Activated CD4-positive, alpha-beta T cell treated with anti-CD3 and anti-CD28 coated beads, Interleukin-2, amount 10 ng/mL, durations not matched to agents 7 days and 5 days (primary cell): ENCODE measurements at regions of chr11 and their contacts with region 1.

Region 1: GRCh38 chr11:134223836-134224709 is at the starts of genes NCAPD3 and VPS26B:
- DNase-seq: peak; percentile 98
- H3K4me3 Mint-ChIP-seq: peak within 1 kb of the TSS; percentile 88
- H3K27ac Mint-ChIP-seq: peak within 1 kb of the TSS; percentile 97
- H3K4me1 Mint-ChIP-seq: peaks cover 67% of the 10 kb centered on the region
- H3K27me3 Mint-ChIP-seq: no peaks in the 10 kb centered on the region
- total RNA-seq, gene NCAPD3: 118 to 125 TPM
- total RNA-seq, gene VPS26B: 66.4 to 66.9 TPM

Region 2: GRCh38 chr11:134244655-134245054 is 20.6 kb after region 1 on chr11:
- CTCF ChIA-PET with region 1: interaction called, 11 read pairs
- POLR2A ChIA-PET with region 1: no interaction called
- DNase-seq: peak; percentile 40
- H3K4me3 Mint-ChIP-seq: no peak overlapping the region
- H3K27ac Mint-ChIP-seq: peak overlapping the region; percentile 47
- H3K4me1 Mint-ChIP-seq: peaks cover 8% of the 10 kb centered on the region
- H3K27me3 Mint-ChIP-seq: no peaks in the 10 kb centered on the region

Region 3: DNA sequence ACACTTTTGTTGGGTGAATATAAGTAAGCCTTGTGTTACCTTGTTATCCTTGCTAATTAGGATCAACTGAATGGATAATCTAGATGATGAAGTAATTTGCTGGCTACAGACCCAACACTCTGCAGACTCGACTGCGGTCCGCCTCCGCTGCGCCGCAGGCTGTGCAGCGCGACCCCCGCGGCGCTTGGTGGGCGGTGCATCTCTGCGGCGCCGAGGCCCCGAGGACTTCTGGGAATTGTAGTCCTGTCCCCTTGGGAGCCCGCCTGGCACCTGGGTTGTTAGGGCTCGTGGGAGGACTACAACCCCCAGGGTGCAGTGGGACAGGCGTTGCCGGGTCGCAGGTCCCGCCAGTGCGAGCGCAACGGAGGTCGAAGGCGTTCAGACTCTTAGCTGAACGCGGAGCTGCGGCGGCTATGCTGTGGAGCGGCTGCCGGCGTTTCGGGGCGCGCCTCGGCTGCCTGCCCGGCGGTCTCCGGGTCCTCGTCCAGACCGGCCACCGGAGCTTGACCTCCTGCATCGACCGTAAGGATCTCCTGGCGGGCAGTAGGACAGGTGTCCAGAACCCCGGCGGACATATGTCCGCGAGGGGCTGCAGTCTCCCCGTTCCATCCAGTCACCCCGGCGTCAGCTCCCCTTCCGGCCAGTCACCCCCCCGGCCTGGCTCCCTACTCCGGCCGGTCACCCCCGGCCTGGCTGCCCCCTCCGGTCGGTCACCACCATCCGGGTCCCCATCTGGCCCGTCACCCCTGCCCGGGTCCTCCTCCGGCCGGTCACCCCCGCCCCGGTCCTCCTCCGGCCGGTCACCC is 29.3 kb after region 1 on chr11 and contains the starts of genes ACAD8 and THYN1:
- CTCF ChIA-PET with region 1: interaction called, 5 read pairs
- POLR2A ChIA-PET with region 1: interaction called, 14 read pairs
- DNase-seq: peak; percentile 97
- H3K4me3 Mint-ChIP-seq: peak within 1 kb of the TSS; percentile 88
- H3K27ac Mint-ChIP-seq: peak within 1 kb of the TSS; percentile 89
- H3K4me1 Mint-ChIP-seq: peaks cover 35% of the 10 kb centered on the region
- H3K27me3 Mint-ChIP-seq: no peaks in the 10 kb centered on the region
- total RNA-seq, gene ACAD8: 21.7 to 21.8 TPM
- total RNA-seq, gene THYN1: 56.4 to 61.6 TPM

Region 4: DNA sequence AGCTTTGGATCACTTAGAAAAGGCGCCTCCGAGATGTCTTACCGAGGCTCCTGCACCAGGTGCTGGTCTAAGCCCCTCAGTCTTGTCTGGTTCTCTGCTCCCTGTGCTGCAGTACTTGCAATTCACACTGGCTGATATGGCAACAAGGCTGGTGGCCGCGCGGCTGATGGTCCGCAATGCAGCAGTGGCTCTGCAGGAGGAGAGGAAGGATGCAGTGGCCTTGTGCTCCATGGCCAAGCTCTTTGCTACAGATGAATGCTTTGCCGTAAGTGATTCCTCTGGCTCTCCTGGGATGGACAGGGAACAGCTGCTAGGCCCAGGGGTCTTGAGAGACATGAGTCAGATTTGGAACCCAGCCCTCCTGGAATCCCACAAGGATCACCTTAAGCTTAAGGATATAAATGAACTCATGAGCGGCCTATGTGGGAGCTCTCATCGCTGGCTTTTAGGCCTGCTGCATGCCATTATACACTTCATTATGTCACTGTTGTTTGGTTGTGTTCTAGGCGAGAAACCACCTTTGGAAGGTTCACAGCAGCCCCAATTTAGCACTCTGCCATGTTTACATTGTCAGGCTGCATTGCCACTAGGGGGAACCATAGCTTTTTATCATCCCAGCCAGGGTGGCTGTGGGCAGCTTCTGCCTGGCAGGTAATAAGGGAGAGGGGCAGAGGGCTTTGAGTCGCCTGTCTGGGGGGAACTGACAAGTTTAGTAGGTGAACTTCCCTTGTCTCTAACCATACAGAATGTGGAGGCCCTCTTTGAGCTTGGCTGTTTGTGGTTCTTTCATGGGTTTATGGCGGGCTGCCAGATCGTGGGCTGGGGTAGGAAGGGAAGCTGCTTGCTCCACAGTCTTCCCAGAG is 37.8 kb after region 1 on chr11:
- CTCF ChIA-PET with region 1: interaction called, 12 read pairs
- POLR2A ChIA-PET with region 1: interaction called, 5 read pairs
- DNase-seq: peak; percentile 66
- H3K4me3 Mint-ChIP-seq: no peak overlapping the region
- H3K27ac Mint-ChIP-seq: no peak overlapping the region
- H3K4me1 Mint-ChIP-seq: peaks cover 17% of the 10 kb centered on the region
- H3K27me3 Mint-ChIP-seq: no peaks in the 10 kb centered on the region

Region 5: GRCh38 chr11:134275534-134276395 is 51.7 kb after region 1 on chr11 and contains the start of gene GLB1L3:
- CTCF ChIA-PET with region 1: interaction called, 26 read pairs
- POLR2A ChIA-PET with region 1: interaction called, 11 read pairs
- DNase-seq: peak; percentile 89
- H3K4me3 Mint-ChIP-seq: peak within 1 kb of the TSS; percentile 88
- H3K27ac Mint-ChIP-seq: peak within 1 kb of the TSS; percentile 95
- H3K4me1 Mint-ChIP-seq: peaks cover 56% of the 10 kb centered on the region
- H3K27me3 Mint-ChIP-seq: peaks cover 3% of the 10 kb centered on the region
- total RNA-seq, gene GLB1L3: 6.8 to 7.2 TPM